ENCODE measurements at regions of chr11 and their contacts with region 1.

Region 1: GRCh38 chr11:65615229-65615941 is at the start of gene PCNX3:
- DNase-seq: peak; percentile 100
- H3K4me3 ChIP-seq: peak within 1 kb of the TSS; percentile 97
- H3K27ac ChIP-seq: peak within 1 kb of the TSS; percentile 75
- H3K4me1 ChIP-seq: peaks cover 48% of the 10 kb centered on the region
- CTCF ChIP-seq: no peak
- total RNA-seq, gene PCNX3: 29.9 and 36.2 TPM in 2 replicates

Region 2: GRCh38 chr11:64710418-64711137 is 904.8 kb before region 1 on chr11:
- CTCF ChIA-PET with region 1: no interaction called
- POLR2A ChIA-PET with region 1: no interaction called
- intact Hi-C with region 1: no loop called
- DNase-seq: no peak
- H3K4me3 ChIP-seq: no peak overlapping the region
- H3K27ac ChIP-seq: no peak overlapping the region
- H3K4me1 ChIP-seq: peaks cover 4% of the 10 kb centered on the region
- CTCF ChIP-seq: no peak

Region 3: GRCh38 chr11:65604258-65604657 is 11.1 kb before region 1 on chr11:
- CTCF ChIA-PET with region 1: no interaction called
- POLR2A ChIA-PET with region 1: interaction called, 13 read pairs
- intact Hi-C with region 1: no loop called
- DNase-seq: no peak
- H3K4me3 ChIP-seq: no peak overlapping the region
- H3K27ac ChIP-seq: no peak overlapping the region
- H3K4me1 ChIP-seq: peaks cover 13% of the 10 kb centered on the region
- CTCF ChIP-seq: no peak

Region 4: GRCh38 chr11:65637794-65638317 is 22.5 kb after region 1 on chr11 and contains the start of gene SIPA1:
- CTCF ChIA-PET with region 1: interaction called, 7 read pairs
- POLR2A ChIA-PET with region 1: interaction called, 4 read pairs
- intact Hi-C with region 1: loop called (anchors 1 kb)
- DNase-seq: peak; percentile 75
- H3K4me3 ChIP-seq: peak within 1 kb of the TSS; percentile 90
- H3K27ac ChIP-seq: peak within 1 kb of the TSS; percentile 95
- H3K4me1 ChIP-seq: peaks cover 51% of the 10 kb centered on the region
- CTCF ChIP-seq: no peak
- total RNA-seq, gene SIPA1: 57.6 and 95.4 TPM in 2 replicates

Region 5: DNA sequence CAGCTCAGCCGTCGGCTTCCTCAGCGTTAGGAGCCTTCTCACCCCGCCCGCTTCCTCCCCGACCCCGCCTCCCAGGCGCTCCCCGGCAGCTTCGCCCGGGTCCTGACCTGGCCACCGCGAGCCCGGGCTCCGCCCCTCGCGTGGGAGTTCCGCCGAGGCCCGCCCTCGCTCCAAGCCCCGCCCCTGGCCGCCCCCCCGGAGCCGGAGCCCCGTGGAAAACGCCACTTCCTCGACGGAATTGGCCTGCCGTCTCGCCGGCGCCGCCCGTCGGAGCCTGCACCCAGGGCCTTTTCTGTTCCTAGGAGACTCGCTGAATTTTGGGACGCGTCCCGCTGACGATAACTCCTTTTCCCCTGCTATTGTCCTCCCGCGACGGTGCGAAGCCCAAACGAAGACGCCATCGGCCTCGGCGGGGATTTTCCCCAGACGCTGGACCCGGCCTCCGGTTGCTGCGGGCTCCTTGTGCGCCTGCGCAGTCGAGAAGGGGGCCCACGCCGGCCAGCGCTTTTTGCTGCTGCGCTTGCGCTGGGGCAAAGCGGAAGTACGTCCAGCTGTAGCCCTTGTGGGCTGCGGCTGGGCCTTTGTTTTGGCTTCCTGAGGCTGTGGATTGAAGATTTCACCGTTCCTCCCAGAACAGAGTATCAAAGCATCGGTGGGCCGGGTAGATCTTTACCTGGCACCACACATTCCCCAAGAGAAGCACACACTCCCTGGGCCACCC is 37.3 kb after region 1 on chr11:
- CTCF ChIA-PET with region 1: no interaction called
- POLR2A ChIA-PET with region 1: no interaction called
- intact Hi-C with region 1: no loop called
- DNase-seq: peak; percentile 76
- H3K4me3 ChIP-seq: peak overlapping the region; percentile 48
- H3K27ac ChIP-seq: peak overlapping the region; percentile 57
- H3K4me1 ChIP-seq: peaks cover 18% of the 10 kb centered on the region
- CTCF ChIP-seq: no peak; the same call in 1 of the 2 replicates

Measured in OCI-LY7 (cell line).